Mammary epithelial cell (primary cell): ENCODE measurements at regions of chr11 and their contacts with region 1.

Region 1: DNA sequence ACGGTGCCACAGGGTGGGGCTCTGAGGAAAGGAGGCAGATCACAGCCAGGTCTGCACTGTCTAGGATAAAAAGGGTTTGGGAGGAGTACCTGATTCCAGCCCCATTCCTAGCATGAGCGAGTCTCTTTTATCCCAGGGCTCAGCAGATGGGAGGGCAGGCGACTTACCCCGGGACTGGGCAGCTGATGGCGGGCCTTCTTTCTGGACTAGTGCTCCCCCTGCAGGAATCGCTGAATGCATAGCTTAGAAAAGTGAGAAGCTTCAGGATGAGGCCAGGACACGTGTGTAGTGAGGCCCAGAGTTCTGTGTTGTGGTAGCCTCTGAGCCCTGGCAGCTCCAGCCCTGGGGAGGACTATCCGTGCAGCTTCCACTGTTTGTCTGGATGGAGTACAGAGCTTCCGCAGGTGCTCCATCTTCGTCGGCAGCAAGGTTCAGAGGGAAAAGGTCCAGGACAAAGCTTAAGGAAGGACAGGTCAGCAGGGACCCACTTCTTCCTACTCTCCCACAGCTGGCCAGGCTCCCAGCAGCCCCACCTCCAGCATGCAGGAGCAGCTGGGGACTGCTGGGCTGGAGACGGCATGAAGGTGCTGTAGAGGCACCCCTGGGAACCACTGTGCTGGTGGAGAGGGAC is 30.4 kb downstream of the COMMD9 start:
- DNase-seq: peak; percentile 35
- H3K4me3 ChIP-seq: no peak overlapping the region
- H3K27ac ChIP-seq: no peak overlapping the region
- H3K4me1 ChIP-seq: peaks cover 9% of the 10 kb centered on the region
- H3K27me3 ChIP-seq: no peaks in the 10 kb centered on the region
- CTCF ChIP-seq: peak; percentile 36 to 47

Region 2: DNA sequence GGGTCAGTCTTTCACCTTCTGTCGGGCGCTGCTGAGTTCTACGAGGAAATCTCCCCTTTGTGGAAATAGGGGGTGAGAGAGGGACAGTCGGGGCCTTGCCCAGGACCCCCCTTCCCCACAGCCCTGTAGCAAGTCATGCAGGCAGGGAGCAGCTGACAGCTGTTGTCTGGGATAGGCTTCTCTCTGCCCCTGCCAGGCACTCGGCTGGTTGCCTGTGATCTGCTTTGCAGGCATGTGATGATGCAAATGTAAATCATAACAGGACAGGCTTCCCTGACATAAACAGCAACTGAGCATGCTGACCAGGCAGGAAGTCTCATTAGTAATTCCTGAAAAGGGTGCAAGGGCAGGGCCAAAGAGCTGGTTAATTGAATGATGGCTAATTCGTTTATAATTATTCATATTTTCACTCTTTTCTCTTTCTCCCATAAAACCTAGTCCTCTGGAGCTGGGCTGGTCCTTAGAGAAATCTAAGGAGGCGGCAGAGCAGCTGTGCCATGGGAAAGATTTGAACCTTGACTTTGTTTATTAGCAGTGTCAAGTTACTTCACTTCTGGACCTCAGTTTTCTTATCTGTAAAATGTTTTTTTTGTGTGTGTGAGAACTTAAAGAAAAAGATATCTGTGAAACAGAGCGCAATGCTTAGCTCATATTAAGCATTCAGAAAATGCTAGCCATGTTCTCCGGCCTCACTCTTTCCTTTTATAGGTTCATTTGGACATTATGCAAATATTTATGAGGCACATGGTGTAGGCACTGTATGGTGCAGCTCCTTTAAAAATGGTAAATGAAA is 185.2 kb before region 1 on chr11:
- CTCF ChIA-PET with region 1: interaction called, 6 read pairs
- dilution Hi-C with region 1: no loop called
- in situ Hi-C with region 1: loop called in 1 of 2 experiments (anchors 25 kb)
- intact Hi-C with region 1: loop called (anchors 5 kb)
- DNase-seq: peak; percentile 30
- H3K4me3 ChIP-seq: no peak overlapping the region
- H3K27ac ChIP-seq: no peak overlapping the region
- H3K4me1 ChIP-seq: peaks cover 18% of the 10 kb centered on the region
- H3K27me3 ChIP-seq: no peaks in the 10 kb centered on the region
- CTCF ChIP-seq: no peak

Region 3: DNA sequence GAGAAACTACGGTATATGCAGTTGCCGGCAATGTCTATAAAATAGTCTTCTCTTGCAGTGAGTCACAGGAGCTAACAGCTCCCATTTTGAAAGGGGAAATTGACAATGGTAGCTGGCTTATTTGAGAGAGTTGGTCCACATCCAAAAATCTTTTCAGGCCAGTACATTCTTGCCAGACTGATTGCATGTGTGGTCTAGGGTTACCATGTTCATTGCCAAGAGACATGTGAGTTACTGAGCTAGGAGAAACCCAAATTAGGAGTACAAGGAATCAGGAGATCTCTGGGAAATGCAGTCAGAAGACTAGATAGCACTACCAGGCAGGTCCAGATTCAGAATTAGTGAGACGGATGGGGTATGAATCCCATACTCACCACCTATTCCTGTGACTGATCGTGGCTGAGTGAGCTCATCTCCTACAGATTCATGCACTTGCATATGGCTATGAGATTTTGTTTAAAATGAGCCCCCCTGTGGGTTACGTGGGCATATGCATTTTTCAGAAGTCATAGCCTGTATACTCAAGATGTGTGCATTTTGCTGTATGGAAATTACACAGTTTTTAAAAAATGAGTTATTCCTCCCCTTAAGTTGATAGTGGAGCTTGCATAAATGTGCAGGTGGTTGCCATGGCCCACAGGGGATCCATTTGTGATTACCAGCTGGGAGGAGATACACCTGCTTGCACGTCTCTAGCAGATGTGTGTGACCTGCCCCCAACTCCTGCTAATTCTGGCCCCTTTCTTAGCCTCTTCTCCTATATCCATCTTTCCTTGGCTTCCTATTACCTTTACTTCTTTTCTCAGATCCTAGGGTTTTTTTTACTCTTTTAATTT is 72.3 kb before region 1 on chr11:
- CTCF ChIA-PET with region 1: no interaction called
- dilution Hi-C with region 1: loop called (anchors 5 kb)
- in situ Hi-C with region 1: no loop called
- intact Hi-C with region 1: no loop called
- DNase-seq: peak; percentile 75
- H3K4me3 ChIP-seq: no peak overlapping the region
- H3K27ac ChIP-seq: no peak overlapping the region
- H3K4me1 ChIP-seq: peaks cover 12% of the 10 kb centered on the region
- H3K27me3 ChIP-seq: no peaks in the 10 kb centered on the region
- CTCF ChIP-seq: no peak